Posterior vena cava (tissue), 2 donors: ENCODE measurements at regions of chr19 and their contacts with region 1.

Region 1: GRCh38 chr19:3163230-3163886 is 15.2 kb upstream of the S1PR4 start:
- DNase-seq: peak; percentile 90

Region 2: DNA sequence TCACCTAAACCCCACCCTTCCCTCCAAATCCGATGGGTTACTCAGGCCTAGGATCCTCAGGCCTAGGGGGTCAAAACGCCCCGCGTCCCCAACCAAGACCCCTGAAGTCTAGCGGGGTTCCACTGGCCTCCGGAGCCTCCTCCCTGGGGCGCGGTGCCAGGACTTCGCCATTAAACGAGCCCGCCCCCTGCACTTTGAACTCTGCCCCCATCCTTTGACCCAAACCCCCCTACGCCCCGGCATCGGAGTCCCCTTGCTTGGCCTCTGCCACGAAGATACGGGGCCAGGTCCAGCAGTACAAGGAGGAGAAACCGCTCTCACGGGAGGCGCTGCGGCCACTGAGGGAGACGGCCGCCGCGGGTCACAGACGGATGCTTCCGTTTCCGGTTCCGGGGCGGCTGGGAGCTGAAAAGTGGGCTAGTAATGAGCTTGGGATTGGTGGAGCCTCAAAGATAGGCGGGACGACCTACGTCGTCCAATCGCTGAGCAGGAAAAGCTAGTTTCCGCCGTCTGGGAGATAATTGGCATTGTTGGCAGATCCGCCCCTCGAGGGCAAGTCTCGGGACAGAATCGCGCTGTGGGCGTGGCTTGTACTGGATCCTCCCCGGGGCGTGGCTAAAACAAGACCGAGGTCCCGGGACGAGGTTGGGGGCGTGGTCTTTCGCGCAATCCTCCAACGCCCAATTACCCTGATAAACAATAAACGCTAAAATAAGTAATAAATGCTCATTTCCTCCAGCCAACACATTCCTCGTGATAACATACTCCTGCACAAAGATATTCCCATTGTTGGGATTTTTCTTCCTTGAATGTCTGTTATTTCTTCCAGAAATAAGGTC is 212.9 kb before region 1 on chr19:
- intact Hi-C with region 1: loop called in 1 of 2 experiments (anchors 5 kb)
- DNase-seq: peak; percentile 100